ENCODE measurements at regions of chr22 and their contacts with region 1.

Region 1: DNA sequence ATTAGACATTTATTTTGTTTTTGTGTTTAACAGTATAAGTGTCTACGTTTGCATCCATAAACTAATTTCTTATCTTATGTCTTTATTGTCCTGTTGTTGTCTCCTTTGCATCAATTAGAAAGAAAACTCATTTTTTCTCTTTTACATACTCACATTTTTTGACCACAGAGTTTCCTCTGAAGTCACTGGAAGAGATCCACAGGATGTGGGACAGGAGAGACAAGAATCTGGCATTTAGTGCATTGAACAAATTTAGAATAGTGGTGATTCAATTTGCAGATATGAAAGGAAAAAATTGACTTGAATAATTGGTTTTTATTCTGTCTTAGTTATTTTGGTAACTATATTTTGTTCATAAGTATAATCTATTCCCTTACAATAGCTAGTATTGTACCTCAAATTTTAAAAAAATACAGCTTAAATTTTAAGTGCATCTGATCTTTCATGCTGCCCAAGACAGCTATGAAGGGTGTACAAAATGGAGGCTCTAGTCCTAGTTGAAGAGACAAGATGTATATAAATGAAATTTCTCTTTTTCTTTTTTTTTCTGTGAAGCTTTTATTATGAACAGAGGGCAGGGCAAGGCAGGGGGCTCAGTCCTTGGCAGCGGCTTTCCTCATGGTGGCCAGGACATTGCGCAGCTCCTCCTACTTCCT is 24.4 kb downstream of the HORMAD2 start:
- DNase-seq: no peak
- H3K4me3 Mint-ChIP-seq: no peak overlapping the region
- H3K27ac Mint-ChIP-seq: peak overlapping the region; percentile 85
- H3K4me1 Mint-ChIP-seq: peaks cover 39% of the 10 kb centered on the region
- H3K27me3 Mint-ChIP-seq: no peaks in the 10 kb centered on the region

Region 2: DNA sequence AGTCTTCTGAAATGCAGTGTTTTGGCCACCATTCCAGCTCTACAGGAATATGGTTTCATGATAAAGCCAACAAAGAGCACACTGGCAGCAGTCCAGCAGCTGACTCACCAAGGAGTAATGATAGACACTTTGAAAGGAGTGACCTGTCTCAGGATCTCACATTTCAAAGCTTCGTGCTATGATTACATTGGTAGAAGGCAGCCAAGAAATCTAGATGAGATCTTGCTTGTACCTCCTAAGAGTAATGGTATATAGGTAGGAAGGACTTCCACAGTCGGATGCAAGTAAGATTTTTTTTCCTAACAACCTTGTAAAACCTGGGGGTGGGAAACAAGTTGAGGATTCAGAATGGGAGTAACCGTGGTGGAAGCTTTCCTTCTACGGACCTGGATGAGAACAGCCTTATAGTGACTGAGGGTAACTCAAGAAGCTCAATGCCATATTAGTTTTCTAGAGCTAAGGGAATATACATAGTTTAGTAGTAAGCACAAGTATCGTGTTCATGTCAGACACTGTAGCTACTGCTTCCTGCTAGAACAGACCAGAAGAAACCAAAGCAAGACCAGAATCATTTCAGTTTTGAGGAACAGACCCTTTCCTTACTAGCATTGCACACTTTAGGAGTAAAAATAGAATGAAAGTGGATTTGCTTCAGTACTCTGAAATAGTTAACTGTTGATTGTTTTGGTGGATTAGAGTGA is 196.7 kb before region 1 on chr22:
- CTCF ChIA-PET with region 1: no interaction called
- POLR2A ChIA-PET with region 1: no interaction called
- intact Hi-C with region 1: no loop called
- DNase-seq: peak; percentile 46
- H3K4me3 Mint-ChIP-seq: no peak overlapping the region
- H3K27ac Mint-ChIP-seq: no peak overlapping the region
- H3K4me1 Mint-ChIP-seq: peaks cover 42% of the 10 kb centered on the region
- H3K27me3 Mint-ChIP-seq: no peaks in the 10 kb centered on the region

Region 3: DNA sequence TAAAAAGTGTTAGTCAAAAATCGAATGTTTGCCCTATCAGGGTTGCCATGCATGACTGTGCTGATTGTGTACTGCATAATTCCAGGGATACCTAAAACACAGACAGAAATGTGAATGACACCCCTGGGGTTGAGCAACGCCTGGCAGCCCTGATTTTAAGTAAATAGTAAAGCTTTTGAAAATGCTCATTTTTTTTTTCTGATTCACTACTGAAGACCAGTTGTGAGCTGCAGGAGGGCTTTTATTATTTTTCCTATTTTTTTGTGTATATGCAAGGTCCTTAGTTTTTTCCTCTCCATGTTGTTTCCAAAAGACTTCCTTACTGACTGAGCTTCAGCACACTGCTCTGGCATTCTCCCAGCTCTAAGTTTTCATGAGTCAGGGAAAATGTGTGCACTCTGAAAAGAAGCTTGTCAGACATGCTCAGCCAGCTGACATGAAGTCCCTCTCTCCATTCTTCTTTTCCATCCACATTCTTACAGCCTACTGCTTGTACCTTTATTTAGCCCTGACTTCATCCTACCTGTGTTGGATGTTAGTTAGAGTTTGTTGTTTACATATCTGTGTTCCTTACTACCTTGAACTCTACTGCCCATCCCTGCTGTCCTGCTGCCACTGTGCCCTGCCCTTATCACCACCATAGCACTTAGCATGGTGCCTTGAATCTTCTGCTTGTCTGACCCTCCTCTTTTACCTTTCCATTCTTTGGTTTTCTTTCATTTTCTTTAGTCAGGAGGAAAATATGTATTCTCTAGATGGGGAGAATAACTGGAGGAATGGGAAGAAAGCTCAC is 55.1 kb after region 1 on chr22:
- CTCF ChIA-PET with region 1: interaction called, 9 read pairs
- POLR2A ChIA-PET with region 1: interaction called, 3 read pairs
- intact Hi-C with region 1: loop called (anchors 10 kb)
- DNase-seq: no peak
- H3K4me3 Mint-ChIP-seq: no peak overlapping the region
- H3K27ac Mint-ChIP-seq: peak overlapping the region; percentile 85
- H3K4me1 Mint-ChIP-seq: peaks cover 58% of the 10 kb centered on the region
- H3K27me3 Mint-ChIP-seq: no peaks in the 10 kb centered on the region

Region 4: GRCh38 chr22:30196141-30196879 is 91.7 kb after region 1 on chr22:
- CTCF ChIA-PET with region 1: interaction called, 10 read pairs
- POLR2A ChIA-PET with region 1: no interaction called
- intact Hi-C with region 1: no loop called
- DNase-seq: peak; percentile 84
- H3K4me3 Mint-ChIP-seq: peak overlapping the region; percentile 56
- H3K27ac Mint-ChIP-seq: peak overlapping the region; percentile 97
- H3K4me1 Mint-ChIP-seq: peaks cover 70% of the 10 kb centered on the region
- H3K27me3 Mint-ChIP-seq: no peaks in the 10 kb centered on the region

Region 5: GRCh38 chr22:30253205-30253852 is 148.7 kb after region 1 on chr22:
- CTCF ChIA-PET with region 1: interaction called, 3 read pairs
- POLR2A ChIA-PET with region 1: no interaction called
- intact Hi-C with region 1: loop called (anchors 1 kb)
- DNase-seq: no peak
- H3K4me3 Mint-ChIP-seq: no peak overlapping the region
- H3K27ac Mint-ChIP-seq: no peak overlapping the region
- H3K4me1 Mint-ChIP-seq: peaks cover 26% of the 10 kb centered on the region
- H3K27me3 Mint-ChIP-seq: no peaks in the 10 kb centered on the region

Region 6: DNA sequence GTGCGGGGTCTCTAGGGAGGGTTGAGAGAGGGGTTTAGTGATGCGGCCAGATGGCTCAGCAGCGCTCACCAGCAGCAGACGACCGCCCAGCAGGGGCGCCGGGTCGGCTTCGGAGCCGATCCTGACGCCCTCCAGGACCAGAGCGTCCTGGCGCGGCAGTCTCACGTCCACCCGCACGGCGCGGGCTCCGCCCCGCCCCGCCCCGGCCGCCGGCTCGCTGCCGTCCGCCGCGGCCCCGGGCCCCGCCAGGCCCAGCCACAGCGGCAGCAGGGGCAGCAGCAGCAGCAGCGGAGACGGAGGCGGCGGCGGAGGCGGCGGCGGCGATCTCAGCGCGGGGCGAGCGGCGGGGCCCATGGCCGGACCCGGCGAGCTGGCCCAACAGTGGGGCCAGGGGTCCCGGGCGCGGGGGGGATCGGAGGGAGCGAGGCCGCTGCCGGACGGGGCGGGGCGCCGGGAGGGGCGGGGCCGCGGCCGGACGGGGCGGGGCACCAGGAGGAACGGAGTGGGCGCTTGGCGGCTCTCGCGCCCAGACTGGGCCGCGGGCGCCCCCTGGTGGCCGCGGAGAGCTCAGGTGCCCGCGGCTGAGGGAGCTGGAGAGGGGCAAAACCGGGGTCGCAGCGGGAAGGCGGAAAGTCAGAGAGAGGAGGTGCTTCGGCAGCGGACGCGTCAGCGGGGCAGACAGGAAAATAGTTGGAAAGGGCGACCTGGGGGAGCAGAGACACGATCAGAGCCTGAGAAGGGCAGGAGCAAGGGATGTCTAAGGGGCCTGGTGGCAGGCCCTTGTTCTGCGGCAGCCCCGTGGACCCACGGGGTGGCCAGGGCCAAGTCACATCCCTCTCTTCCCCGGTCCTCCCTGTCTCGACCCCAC is 282.6 kb after region 1 on chr22 and contains the start of gene RNF215:
- CTCF ChIA-PET with region 1: interaction called, 15 read pairs
- POLR2A ChIA-PET with region 1: no interaction called
- intact Hi-C with region 1: loop called (anchors 5 kb)
- DNase-seq: peak; percentile 84
- H3K4me3 Mint-ChIP-seq: peak within 1 kb of the TSS; percentile 80
- H3K27ac Mint-ChIP-seq: peak within 1 kb of the TSS; percentile 39
- H3K4me1 Mint-ChIP-seq: peaks cover 24% of the 10 kb centered on the region
- H3K27me3 Mint-ChIP-seq: peaks cover 1% of the 10 kb centered on the region
- total RNA-seq, gene RNF215: 8.8 to 10.2 TPM